Mammary epithelial cell (primary cell): ENCODE measurements at regions of chr20 and their contacts with region 1.

Region 1: DNA sequence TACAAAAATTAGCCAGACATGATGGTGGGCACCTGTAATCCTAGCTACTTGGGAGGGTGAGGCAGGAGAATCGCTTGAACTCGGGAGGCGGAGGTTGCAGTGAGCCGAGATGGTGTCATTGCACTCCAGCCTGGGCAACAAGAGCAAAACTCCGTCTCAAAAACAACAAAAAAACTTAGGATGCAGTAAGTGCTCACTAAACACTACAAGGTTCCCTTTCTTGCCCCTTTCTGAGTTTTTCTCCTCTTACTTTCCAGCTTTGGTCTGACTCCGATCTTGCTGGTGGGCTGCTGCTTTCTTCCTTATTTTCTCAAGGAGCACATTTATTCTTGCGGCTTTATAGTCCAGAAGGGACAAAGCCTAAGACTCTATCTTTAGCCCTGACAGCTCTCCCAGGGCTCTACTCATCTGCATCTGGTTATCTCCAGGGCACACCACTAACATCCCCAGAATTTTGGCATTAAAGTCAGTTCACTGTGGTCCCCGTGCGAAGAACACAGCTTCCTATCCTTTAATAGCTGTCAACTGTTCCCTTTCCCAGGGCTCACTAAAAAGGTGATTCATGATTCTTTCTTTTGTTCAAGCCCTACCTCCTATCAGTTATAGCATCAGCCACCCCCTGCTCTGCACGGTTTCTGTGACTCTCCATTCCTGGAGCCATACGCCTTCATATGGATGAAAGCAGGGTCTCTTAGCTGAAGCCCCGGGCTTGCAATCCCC is 17.1 kb upstream of the RPN2 start:
- DNase-seq: no peak
- H3K4me3 ChIP-seq: no peak overlapping the region
- H3K27ac ChIP-seq: no peak overlapping the region
- H3K4me1 ChIP-seq: no peaks in the 10 kb centered on the region
- H3K27me3 ChIP-seq: no peaks in the 10 kb centered on the region
- CTCF ChIP-seq: no peak

Region 2: DNA sequence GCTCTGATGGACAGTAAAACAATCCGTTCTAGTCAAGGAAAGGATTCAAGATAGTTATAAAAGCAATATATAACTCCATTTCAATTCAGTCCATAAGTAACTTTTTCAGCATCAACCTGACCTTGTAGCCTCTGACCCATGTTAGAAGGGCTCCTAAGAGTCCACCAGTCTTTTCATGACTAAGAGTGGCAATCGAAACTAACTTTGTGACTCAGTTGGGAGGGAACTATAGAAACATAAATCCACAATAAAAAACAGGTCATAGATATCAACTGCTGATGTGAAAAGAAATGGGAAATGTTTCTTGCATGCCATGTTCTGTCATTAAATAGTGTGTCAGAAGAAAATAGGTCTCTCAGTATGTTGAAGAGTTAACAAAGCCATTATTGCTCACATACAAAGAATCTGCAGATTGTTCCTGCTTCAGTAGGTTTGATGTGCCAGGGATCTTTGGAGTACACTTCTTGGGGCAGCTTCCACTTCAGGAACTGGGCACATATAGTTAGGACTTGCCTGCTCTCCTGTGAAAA is 50.0 kb before region 1 on chr20:
- CTCF ChIA-PET with region 1: no interaction called
- dilution Hi-C with region 1: loop called (anchors 10 kb)
- in situ Hi-C with region 1: no loop called
- intact Hi-C with region 1: no loop called
- DNase-seq: peak; percentile 30
- H3K4me3 ChIP-seq: no peak overlapping the region
- H3K27ac ChIP-seq: no peak overlapping the region
- H3K4me1 ChIP-seq: no peaks in the 10 kb centered on the region
- H3K27me3 ChIP-seq: peaks cover 3% of the 10 kb centered on the region
- CTCF ChIP-seq: no peak

Region 3: DNA sequence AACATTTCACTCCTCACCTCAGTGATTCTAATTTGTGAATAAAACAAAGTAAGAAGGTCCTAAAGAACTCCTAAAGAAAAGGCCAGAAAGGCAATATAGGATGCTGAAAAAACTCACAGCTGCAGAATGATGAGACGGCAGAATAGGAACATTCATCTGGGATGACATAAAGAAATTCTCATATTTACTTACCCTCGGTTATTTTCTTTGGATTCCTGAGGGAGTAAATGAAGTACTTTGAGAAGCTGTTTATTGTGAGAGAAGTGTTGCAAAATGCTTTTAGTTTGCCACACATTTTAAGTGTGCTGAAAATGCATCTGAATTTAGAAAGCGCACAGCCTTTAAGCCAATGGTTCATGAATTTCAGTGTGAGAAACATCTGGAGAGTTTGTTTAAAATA is 30.5 kb before region 1 on chr20:
- CTCF ChIA-PET with region 1: no interaction called
- dilution Hi-C with region 1: loop called (anchors 5 kb)
- in situ Hi-C with region 1: no loop called
- intact Hi-C with region 1: no loop called
- DNase-seq: no peak
- H3K4me3 ChIP-seq: no peak overlapping the region
- H3K27ac ChIP-seq: no peak overlapping the region
- H3K4me1 ChIP-seq: no peaks in the 10 kb centered on the region
- H3K27me3 ChIP-seq: no peaks in the 10 kb centered on the region
- CTCF ChIP-seq: no peak

Region 4: GRCh38 chr20:37192137-37192854 is 30.3 kb after region 1 on chr20:
- CTCF ChIA-PET with region 1: no interaction called
- dilution Hi-C with region 1: no loop called
- in situ Hi-C with region 1: no loop called
- intact Hi-C with region 1: no loop called
- DNase-seq: peak; percentile 67
- H3K4me3 ChIP-seq: no peak overlapping the region
- H3K27ac ChIP-seq: no peak overlapping the region
- H3K4me1 ChIP-seq: peaks cover 3% of the 10 kb centered on the region
- H3K27me3 ChIP-seq: no peaks in the 10 kb centered on the region
- CTCF ChIP-seq: peak; percentile 89 to 93

Region 5: DNA sequence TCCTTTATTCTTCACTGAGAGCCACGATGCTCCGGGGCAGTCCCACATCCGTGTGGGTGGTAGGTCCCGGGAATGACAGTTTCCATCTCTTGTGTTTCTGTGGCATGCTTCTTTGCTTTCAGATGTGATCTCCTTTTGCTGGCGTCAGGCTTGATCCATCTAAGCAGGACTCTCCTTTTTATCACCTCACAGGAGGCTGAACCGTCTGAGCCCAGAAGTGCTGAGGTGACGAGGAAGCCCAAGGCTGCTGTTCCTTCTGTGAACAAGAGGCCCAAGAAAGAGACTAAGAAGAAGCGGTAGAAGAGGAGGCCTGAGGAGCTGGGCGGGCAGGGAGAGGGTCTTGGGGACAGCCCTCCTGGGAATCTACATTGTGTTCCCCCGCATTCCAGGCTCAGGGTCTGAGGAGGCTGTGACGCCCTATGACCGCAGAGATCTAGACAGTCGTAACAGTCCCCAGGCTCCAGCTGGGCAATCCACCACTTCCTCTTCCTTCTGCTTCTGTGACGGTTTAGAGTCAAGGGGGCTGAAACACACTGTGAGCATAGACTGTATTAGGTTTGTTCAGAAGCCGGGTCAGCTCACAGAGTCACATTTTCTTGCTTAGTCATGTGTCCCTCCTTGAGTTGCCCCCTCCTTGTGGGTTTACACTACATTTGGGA is 154.3 kb after region 1 on chr20:
- CTCF ChIA-PET with region 1: no interaction called
- dilution Hi-C with region 1: no loop called
- in situ Hi-C with region 1: no loop called
- intact Hi-C with region 1: no loop called
- DNase-seq: no peak
- H3K4me3 ChIP-seq: no peak overlapping the region
- H3K27ac ChIP-seq: peak overlapping the region; percentile 75
- H3K4me1 ChIP-seq: peaks cover 36% of the 10 kb centered on the region
- H3K27me3 ChIP-seq: no peaks in the 10 kb centered on the region
- CTCF ChIP-seq: no peak